ENCODE measurements at regions of chr4 and their contacts with region 1.

Region 1: GRCh38 chr4:127188856-127189255 is 443.9 kb upstream of the INTU start:
- DNase-seq: no peak
- H3K4me3 ChIP-seq: no peak overlapping the region
- H3K27ac ChIP-seq: no peak overlapping the region
- H3K4me1 ChIP-seq: no peaks in the 10 kb centered on the region
- H3K27me3 ChIP-seq: no peaks in the 10 kb centered on the region
- CTCF ChIP-seq: peak in 3 of 6 experiments; percentile 3 to 50 (median 47)
- POLR2A ChIP-seq: no peak

Region 2: GRCh38 chr4:127236889-127237288 is 48.0 kb after region 1 on chr4:
- intact Hi-C with region 1: no loop called
- DNase-seq: no peak
- H3K4me3 ChIP-seq: no peak overlapping the region
- H3K27ac ChIP-seq: no peak overlapping the region
- H3K4me1 ChIP-seq: no peaks in the 10 kb centered on the region
- H3K27me3 ChIP-seq: no peaks in the 10 kb centered on the region
- CTCF ChIP-seq: no peak
- POLR2A ChIP-seq: no peak

Region 3: GRCh38 chr4:127400731-127401346 is 212.0 kb after region 1 on chr4:
- intact Hi-C with region 1: loop called (anchors 5 kb)
- DNase-seq: peak; percentile 59 to 82
- H3K4me3 ChIP-seq: no peak overlapping the region
- H3K27ac ChIP-seq: no peak overlapping the region
- H3K4me1 ChIP-seq: peaks cover 0 to 4% of the 10 kb centered on the region in 2 donors
- H3K27me3 ChIP-seq: no peaks in the 10 kb centered on the region
- CTCF ChIP-seq: peak; percentile 52 to 86 (median 82)
- POLR2A ChIP-seq: no peak